ENCODE measurements at regions of chr12 and their contacts with region 1.

Region 1: DNA sequence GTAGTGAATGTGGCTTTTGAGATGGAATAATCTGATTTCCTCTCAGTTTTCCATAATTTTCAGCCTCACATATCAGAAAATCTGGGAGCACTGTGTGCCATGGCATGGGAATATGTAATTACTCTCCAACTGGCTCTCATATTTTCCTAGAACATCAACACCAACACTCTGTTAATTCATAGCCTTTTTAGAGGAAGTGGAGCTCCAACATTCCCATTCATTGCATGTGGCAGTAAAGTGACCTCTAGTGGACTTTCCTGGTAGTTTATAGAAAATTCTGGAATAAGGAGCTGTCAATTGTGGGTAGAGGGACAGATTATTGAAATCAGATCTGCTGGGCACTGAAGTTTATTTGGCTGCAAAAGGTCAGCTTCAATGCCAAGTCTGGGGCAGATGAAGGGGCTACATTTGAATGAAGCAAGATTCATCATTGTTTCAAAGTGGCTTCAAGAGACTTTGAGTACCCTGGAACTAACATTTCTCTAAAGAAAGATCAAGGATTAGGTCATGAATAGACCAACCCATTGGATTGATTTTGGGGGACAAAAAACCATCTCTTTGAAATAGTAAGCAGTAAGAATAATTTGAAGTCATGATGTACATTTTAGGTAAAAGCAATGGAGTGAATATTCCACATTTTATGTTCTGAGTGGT is 23.6 kb upstream of the USP44 start:
- DNase-seq: no peak
- ATAC-seq: no peak
- H3K4me3 Mint-ChIP-seq: peak overlapping the region; percentile 85
- H3K27ac Mint-ChIP-seq: peak overlapping the region; percentile 97
- H3K4me1 Mint-ChIP-seq: peaks cover 49% of the 10 kb centered on the region
- H3K27me3 Mint-ChIP-seq: peaks cover 2% of the 10 kb centered on the region
- CTCF ChIP-seq: no peak

Region 2: DNA sequence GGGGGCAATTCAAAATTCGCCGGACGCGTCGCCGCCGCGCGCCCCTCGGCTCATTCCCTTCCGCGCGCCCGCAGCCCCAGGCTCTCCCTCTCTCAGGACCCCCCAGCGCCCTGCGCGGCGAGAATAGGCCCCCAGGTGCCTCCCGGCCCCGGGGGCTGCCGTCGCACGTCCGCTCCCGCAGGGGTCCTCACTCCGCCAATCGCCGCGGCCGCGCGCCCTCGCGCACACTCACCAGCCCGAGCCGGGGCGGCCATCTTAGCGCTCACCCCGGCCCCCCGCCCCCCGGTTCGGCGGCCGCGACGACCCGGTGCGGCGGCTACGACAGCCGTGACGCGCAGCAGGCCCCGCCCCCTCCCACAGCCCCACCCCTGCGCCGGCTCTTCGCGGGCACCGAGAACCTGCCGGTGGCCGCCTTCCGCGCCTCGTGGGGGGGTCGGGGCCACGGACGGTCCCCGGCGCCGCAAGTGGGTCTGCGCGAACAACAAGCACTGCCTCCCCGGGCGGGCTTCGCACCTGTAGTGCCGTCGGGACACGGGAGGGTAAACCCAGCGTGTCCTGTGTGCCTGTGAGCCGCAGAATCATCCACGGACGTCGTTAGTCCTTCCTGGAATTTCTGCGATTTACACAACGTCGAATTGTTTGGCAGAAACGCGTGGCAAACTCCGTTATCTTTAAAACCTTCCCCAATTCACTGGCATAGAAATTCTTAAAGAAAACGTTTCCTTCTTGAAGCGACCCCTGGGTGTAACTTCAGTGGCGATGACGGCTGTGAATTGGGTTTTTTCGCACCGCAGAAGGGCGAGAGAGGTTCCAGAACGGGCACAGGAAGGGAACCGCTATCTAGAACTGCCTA is 26.2 kb before region 1 on chr12:
- CTCF ChIA-PET with region 1: interaction called, 3 read pairs
- POLR2A ChIA-PET with region 1: interaction called, 19 read pairs
- intact Hi-C with region 1: loop called (anchors 1 kb)
- DNase-seq: peak; percentile 64
- ATAC-seq: peak; percentile 86
- H3K4me3 Mint-ChIP-seq: peak overlapping the region; percentile 91
- H3K27ac Mint-ChIP-seq: peak overlapping the region; percentile 73
- H3K4me1 Mint-ChIP-seq: peaks cover 22% of the 10 kb centered on the region
- H3K27me3 Mint-ChIP-seq: no peaks in the 10 kb centered on the region
- CTCF ChIP-seq: no peak

Region 3: GRCh38 chr12:95763809-95764253 is 188.9 kb after region 1 on chr12:
- CTCF ChIA-PET with region 1: no interaction called
- POLR2A ChIA-PET with region 1: no interaction called
- intact Hi-C with region 1: no loop called
- DNase-seq: no peak
- ATAC-seq: no peak
- H3K4me3 Mint-ChIP-seq: no peak overlapping the region
- H3K27ac Mint-ChIP-seq: no peak overlapping the region
- H3K4me1 Mint-ChIP-seq: peaks cover 13% of the 10 kb centered on the region
- H3K27me3 Mint-ChIP-seq: peaks cover 7% of the 10 kb centered on the region
- CTCF ChIP-seq: no peak